GM12878 (cell line): ENCODE measurements at regions of chr5 and their contacts with region 1.

Region 1: GRCh38 chr5:1772634-1773033 is 27.0 kb downstream of the MRPL36 start:
- DNase-seq: no peak
- ATAC-seq: 0 out of 3 replicates have a peak, but pooled peaks have one; percentile 24
- H3K4me3 ChIP-seq: no peak overlapping the region
- H3K27ac ChIP-seq: no peak overlapping the region
- H3K4me1 ChIP-seq: no peaks in the 10 kb centered on the region; the same call in 1 of the 2 replicates
- H3K27me3 ChIP-seq: no peaks in the 10 kb centered on the region
- CTCF ChIP-seq: peak; percentile 8 to 25 (median 10); a peak in 2 of 6 replicates
- EP300 ChIP-seq: no peak
- POLR2A ChIP-seq: no peak
- RAD21 ChIP-seq: peak; percentile 53

Region 2: DNA sequence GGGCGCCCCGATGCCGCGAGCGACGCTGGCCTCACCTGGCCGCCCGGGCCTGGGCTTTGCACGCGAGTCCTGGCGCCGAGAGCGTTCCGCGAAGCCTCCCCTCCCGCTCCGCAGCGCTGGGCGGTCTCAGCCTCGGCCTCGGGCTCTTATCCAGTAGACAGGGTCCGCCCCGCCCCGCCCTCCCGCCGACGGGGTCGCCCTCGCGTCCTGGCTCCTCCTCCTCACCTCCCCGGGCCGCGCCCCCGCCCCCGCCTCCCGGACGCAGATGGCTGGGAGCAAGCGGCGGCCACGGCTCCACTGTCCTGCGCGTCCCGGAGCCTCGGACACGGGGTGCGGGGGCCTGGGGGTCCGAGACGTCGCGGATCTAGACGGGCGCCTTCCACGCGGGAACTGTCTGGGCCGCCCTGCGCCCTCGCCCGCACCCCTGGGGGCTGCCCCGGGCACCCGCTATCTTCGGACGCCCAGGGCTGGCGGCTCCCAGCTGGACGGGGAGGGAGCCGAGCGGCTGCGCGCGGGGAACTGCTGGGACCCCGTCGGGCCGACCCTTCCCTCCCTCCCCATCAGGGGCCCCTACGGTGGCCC is 327.2 kb before region 1 on chr5 and contains the start of gene SLC6A3:
- CTCF ChIA-PET with region 1: no interaction called
- POLR2A ChIA-PET with region 1: no interaction called
- RAD21 ChIA-PET with region 1: no interaction called
- SMC1A ChIA-PET with region 1: no interaction called
- in situ Hi-C with region 1: no loop called
- intact Hi-C with region 1: no loop called
- DNase-seq: no peak
- ATAC-seq: no peak
- H3K4me3 ChIP-seq: no peak within 1 kb of the TSS
- H3K27ac ChIP-seq: no peak within 1 kb of the TSS
- H3K4me1 ChIP-seq: no peaks in the 10 kb centered on the region
- H3K27me3 ChIP-seq: peaks cover 8% of the 10 kb centered on the region in 2 experiments
- CTCF ChIP-seq: no peak
- EP300 ChIP-seq: no peak
- POLR2A ChIP-seq: no peak
- RAD21 ChIP-seq: no peak
- polyA plus RNA-seq, gene SLC6A3: not detected

Region 3: DNA sequence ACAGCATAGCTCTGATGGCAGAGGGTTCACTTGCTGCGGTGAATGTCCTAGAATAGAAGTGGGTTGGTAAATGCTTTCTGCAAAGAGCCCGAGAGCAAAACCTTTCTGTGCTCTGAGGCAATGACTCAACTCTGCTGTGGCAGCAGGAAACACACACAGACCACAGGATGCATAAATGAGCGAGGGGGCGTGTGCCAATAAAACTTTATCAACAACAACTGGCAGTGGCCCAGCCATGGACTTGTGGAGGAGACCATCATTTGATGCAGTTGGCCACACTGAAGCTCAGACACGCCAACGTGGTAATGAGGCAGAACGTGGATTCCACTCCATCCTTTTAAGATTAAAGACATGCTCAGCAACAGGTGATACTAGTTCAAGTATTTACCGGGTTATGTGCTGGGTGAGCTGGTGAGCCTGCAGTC is 20.2 kb after region 1 on chr5:
- CTCF ChIA-PET with region 1: interaction called, 5 read pairs
- POLR2A ChIA-PET with region 1: no interaction called
- RAD21 ChIA-PET with region 1: interaction called, 4 read pairs
- SMC1A ChIA-PET with region 1: interaction called, 11 read pairs
- in situ Hi-C with region 1: no loop called
- intact Hi-C with region 1: no loop called
- DNase-seq: peak; percentile 99
- ATAC-seq: peak; percentile 94
- H3K4me3 ChIP-seq: peak overlapping the region; percentile 56; the same call in 1 of the 2 replicates
- H3K27ac ChIP-seq: peak overlapping the region; percentile 92
- H3K4me1 ChIP-seq: peaks cover 58% of the 10 kb centered on the region
- H3K27me3 ChIP-seq: no peaks in the 10 kb centered on the region
- CTCF ChIP-seq: no peak
- EP300 ChIP-seq: peak; percentile 85 to 97
- POLR2A ChIP-seq: peak; percentile 63
- RAD21 ChIP-seq: 0 out of 2 replicates have a peak, but pooled peaks have one; percentile 23